Endothelial cell of umbilical vein (primary cell): ENCODE measurements at regions of chr6 and their contacts with region 1.

Region 1: GRCh38 chr6:26234421-26235296 is 130.3 kb upstream of the BTN3A2 start:
- DNase-seq: peak; percentile 89
- H3K4me3 ChIP-seq: peak overlapping the region; percentile 30 to 73 (median 59)
- H3K27ac ChIP-seq: peak overlapping the region; percentile 83
- H3K4me1 ChIP-seq: peaks cover 25% of the 10 kb centered on the region
- H3K27me3 ChIP-seq: no peaks in the 10 kb centered on the region
- CTCF ChIP-seq: no peak
- POLR2A ChIP-seq: peak; percentile 5

Region 2: GRCh38 chr6:25590986-25591385 is 643.7 kb before region 1 on chr6:
- CTCF ChIA-PET with region 1: no interaction called
- POLR2A ChIA-PET with region 1: no interaction called
- dilution Hi-C with region 1: no loop called
- intact Hi-C with region 1: no loop called
- DNase-seq: no peak
- H3K4me3 ChIP-seq: no peak overlapping the region
- H3K27ac ChIP-seq: no peak overlapping the region
- H3K4me1 ChIP-seq: no peaks in the 10 kb centered on the region
- H3K27me3 ChIP-seq: no peaks in the 10 kb centered on the region
- CTCF ChIP-seq: no peak
- POLR2A ChIP-seq: no peak

Region 3: DNA sequence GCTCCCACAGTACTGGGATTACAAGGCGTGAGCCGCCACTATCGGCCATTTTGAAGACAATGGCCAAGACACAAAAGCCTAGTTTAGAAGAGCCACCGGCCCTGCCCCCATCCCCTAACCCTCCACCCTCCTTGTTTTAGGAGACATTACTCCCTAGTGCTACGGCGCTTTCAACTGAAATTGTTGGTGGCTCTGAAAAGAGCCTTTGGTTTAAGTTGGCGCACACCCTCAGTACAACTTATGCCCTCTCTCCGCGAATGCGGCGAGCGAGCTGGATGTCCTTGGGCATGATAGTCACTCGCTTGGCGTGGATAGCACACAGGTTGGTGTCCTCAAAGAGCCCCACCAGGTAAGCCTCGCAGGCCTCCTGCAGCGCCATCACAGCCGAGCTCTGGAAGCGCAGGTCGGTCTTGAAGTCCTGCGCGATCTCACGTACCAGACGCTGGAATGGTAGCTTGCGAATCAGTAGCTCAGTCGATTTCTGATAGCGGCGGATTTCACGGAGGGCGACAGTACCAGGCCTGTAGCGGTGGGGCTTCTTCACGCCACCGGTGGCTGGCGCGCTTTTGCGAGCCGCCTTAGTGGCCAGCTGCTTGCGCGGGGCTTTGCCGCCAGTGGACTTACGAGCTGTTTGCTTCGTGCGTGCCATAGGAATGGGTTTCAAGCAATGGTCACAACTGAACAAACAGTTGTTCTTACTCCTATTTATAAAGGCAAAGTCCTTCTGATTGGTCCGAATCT is 15.5 kb after region 1 on chr6:
- CTCF ChIA-PET with region 1: interaction called, 28 read pairs
- POLR2A ChIA-PET with region 1: interaction called, 20 read pairs
- dilution Hi-C with region 1: no loop called
- intact Hi-C with region 1: loop called (anchors 2 kb)
- DNase-seq: peak; percentile 87
- H3K4me3 ChIP-seq: peak overlapping the region; percentile 27 to 85 (median 49)
- H3K27ac ChIP-seq: peak overlapping the region; percentile 67
- H3K4me1 ChIP-seq: peaks cover 3% of the 10 kb centered on the region
- H3K27me3 ChIP-seq: no peaks in the 10 kb centered on the region
- CTCF ChIP-seq: peak; percentile 28 to 52
- POLR2A ChIP-seq: peak; percentile 87

Region 4: GRCh38 chr6:26258200-26258977 is 23.7 kb after region 1 on chr6:
- CTCF ChIA-PET with region 1: interaction called, 12 read pairs
- POLR2A ChIA-PET with region 1: no interaction called
- dilution Hi-C with region 1: no loop called
- intact Hi-C with region 1: no loop called
- DNase-seq: no peak
- H3K4me3 ChIP-seq: no peak overlapping the region
- H3K27ac ChIP-seq: no peak overlapping the region
- H3K4me1 ChIP-seq: no peaks in the 10 kb centered on the region
- H3K27me3 ChIP-seq: peaks cover 12 to 13% of the 10 kb centered on the region in 2 experiments
- CTCF ChIP-seq: peak; percentile 13 to 17
- POLR2A ChIP-seq: no peak